ENCODE measurements at regions of chr11 and their contacts with region 1.

Region 1: DNA sequence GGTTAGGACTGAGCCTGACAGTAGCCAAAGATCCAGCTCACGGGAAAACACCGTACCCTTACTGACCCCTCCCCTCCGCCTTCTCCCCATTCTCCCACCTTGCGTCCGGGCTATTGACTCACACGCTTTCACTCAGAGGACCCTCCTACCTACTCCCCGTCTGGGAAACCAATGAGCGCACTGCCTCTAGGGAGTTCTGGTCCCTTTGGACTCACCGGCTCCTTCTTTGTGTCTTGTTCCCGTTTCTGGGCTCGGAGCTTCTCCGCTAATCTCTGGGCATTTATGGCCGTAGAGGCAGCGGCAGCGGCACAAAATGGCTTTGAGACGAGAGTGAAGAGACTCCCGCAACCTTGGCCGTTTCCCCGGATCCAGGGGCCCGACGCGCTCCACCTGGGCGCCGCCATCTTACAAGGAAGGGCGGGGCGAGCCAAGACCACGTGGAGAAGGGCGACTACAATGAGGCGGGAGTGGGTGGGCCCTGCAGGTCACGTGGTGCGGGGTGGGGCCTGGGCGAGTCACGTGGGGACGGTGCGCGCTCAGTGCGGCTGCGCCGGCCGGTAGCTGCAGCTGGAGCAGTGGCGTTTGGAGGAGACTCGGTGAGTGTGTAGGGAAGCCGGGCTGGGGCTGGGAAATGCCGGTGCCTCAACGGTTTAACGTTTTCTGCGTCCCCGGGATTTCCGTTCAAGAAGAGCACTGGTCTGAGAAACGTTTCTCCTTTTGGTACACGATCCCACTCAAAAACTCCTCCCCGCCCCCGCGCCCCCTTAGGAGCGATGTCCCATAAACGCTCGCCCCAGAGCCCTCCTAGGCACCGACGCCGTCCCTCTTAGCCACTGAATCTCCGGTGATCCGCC is at the starts of genes FAM118B and RPUSD4:
- DNase-seq: peak; percentile 99
- H3K4me3 Mint-ChIP-seq: peak within 1 kb of the TSS; percentile 94
- H3K27ac Mint-ChIP-seq: peak within 1 kb of the TSS; percentile 86
- H3K4me1 Mint-ChIP-seq: peaks cover 32% of the 10 kb centered on the region
- H3K27me3 Mint-ChIP-seq: no peaks in the 10 kb centered on the region
- total RNA-seq, gene FAM118B: 5.6 to 6.3 TPM
- total RNA-seq, gene RPUSD4: 33.0 to 34.7 TPM

Region 2: GRCh38 chr11:125592305-125593112 is 619.0 kb before region 1 on chr11 and contains the start of gene STT3A:
- CTCF ChIA-PET with region 1: no interaction called
- intact Hi-C with region 1: loop called (anchors 1 kb)
- DNase-seq: peak; percentile 99
- H3K4me3 Mint-ChIP-seq: peak within 1 kb of the TSS; percentile 100
- H3K27ac Mint-ChIP-seq: peak within 1 kb of the TSS; percentile 92
- H3K4me1 Mint-ChIP-seq: peaks cover 51% of the 10 kb centered on the region
- H3K27me3 Mint-ChIP-seq: no peaks in the 10 kb centered on the region
- total RNA-seq, gene STT3A: 111 to 113 TPM

Region 3: GRCh38 chr11:125887373-125888324 is 323.8 kb before region 1 on chr11 and contains the start of gene HYLS1:
- CTCF ChIA-PET with region 1: no interaction called
- intact Hi-C with region 1: loop called (anchors 1 kb)
- DNase-seq: peak; percentile 97
- H3K4me3 Mint-ChIP-seq: peak within 1 kb of the TSS; percentile 81
- H3K27ac Mint-ChIP-seq: peak within 1 kb of the TSS; percentile 88
- H3K4me1 Mint-ChIP-seq: peaks cover 35% of the 10 kb centered on the region
- H3K27me3 Mint-ChIP-seq: no peaks in the 10 kb centered on the region
- total RNA-seq, gene HYLS1: 10.2 to 11.7 TPM

Region 4: DNA sequence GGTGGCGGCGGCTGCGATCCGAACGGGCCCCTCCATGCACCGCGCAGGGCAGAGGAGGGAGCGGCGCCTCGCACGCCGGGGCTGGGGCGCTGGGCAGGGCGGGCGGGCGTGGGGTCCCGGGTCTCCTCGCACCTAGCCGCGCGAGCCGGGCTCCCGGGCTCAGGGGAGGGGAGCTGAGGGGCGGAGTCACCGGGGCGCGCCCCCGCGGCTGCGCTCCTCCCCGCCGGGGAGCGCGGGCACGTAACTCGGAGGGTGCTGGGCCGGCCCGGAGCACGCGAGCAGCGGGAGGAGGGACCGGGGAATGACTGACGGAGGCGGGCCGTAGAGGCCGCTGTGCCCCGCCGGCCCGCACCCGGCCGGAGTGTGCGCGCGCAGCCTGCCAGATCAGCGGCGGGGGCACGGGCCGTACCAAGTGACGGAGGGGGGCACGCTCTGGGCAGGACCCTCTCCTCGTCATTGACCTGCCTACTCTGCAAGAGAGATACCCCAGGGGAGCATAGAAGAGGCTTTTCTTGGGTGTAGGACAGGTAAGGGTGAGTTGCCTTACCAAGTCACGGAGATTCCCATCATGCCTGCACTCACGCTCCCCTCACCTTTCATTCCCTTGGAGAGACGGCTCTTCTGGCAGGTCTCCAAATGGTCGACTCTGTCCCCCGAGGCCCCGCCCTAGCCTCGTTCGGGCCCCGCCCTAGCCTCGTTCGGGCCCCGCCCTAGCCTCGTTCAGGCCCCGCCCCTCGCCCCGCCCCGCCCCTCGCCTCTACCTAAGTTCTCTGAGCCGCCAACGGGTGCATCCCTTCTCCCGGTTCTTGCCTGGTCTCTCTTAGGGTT is 148.6 kb before region 1 on chr11 and contains the start of gene CDON:
- CTCF ChIA-PET with region 1: no interaction called
- intact Hi-C with region 1: loop called (anchors 1 kb)
- DNase-seq: peak; percentile 92
- H3K4me3 Mint-ChIP-seq: peak within 1 kb of the TSS; percentile 77
- H3K27ac Mint-ChIP-seq: peak within 1 kb of the TSS; percentile 92
- H3K4me1 Mint-ChIP-seq: peaks cover 5% of the 10 kb centered on the region
- H3K27me3 Mint-ChIP-seq: peaks cover 17% of the 10 kb centered on the region
- total RNA-seq, gene CDON: 2.6 to 3.5 TPM

Region 5: DNA sequence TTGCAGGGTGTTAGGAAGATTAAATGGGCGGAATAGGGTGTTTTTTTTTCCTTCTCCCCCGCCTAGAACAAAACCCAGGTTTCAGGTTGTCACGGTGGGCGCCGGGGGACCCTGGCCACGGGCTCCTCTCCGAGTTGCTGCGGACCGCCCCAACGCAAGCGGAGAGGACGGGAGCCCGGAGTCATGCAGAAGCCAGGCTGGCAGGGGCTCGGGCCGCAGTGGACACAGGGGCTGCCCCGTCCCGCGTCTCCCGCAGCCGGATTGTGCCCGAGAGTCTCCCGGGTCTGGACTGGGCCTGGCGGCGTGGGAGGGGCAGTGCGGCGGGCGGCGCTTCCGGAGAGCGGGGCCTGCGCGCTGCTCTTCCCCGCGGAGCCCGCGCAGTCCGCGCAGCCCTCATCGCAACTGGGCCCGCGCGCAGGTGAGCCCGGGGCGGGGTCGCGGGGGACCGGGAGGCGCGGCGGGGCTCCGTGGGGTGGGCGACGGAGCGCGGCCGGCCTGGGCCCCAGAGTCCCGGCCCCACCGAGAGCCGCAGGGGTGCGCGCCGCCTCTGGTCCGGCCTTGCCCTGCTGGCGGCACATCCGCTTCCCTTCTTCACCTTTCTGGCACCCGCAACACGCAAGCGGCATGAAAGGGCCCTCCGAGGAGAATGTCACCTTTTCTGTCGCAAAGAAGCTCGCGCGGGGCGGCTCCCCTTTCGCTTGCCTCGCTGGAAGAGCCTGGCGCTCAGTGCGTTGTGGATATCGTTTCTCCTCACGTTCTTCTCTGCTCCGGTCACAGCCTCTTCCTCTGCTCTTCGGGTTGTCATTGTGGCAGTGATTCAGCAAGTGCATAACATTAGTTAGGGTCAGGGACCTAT is 71.5 kb after region 1 on chr11 and contains the start of gene TIRAP:
- CTCF ChIA-PET with region 1: no interaction called
- intact Hi-C with region 1: loop called (anchors 1 kb)
- DNase-seq: peak; percentile 70
- H3K4me3 Mint-ChIP-seq: peak within 1 kb of the TSS; percentile 95
- H3K27ac Mint-ChIP-seq: peak within 1 kb of the TSS; percentile 93
- H3K4me1 Mint-ChIP-seq: peaks cover 49% of the 10 kb centered on the region
- H3K27me3 Mint-ChIP-seq: no peaks in the 10 kb centered on the region
- total RNA-seq, gene TIRAP: 2.7 to 3.5 TPM

Region 6: GRCh38 chr11:126355324-126355925 is 144.0 kb after region 1 on chr11 and contains the start of gene ST3GAL4:
- CTCF ChIA-PET with region 1: no interaction called
- intact Hi-C with region 1: loop called (anchors 1 kb)
- DNase-seq: peak; percentile 76
- H3K4me3 Mint-ChIP-seq: peak within 1 kb of the TSS; percentile 91
- H3K27ac Mint-ChIP-seq: peak within 1 kb of the TSS; percentile 82
- H3K4me1 Mint-ChIP-seq: peaks cover 33% of the 10 kb centered on the region
- H3K27me3 Mint-ChIP-seq: no peaks in the 10 kb centered on the region
- total RNA-seq, gene ST3GAL4: 7.6 to 8.0 TPM

Region 7: GRCh38 chr11:126480410-126481302 is 269.2 kb after region 1 on chr11:
- CTCF ChIA-PET with region 1: no interaction called
- intact Hi-C with region 1: loop called (anchors 2 kb)
- DNase-seq: peak; percentile 83
- H3K4me3 Mint-ChIP-seq: peak overlapping the region; percentile 51
- H3K27ac Mint-ChIP-seq: no peak overlapping the region
- H3K4me1 Mint-ChIP-seq: peaks cover 14% of the 10 kb centered on the region
- H3K27me3 Mint-ChIP-seq: no peaks in the 10 kb centered on the region

Measured in activated naive CD4-positive, alpha-beta T cell treated with anti-CD3 and anti-CD28 coated beads for 36 hours (primary cell).